ENCODE measurements at regions of chrX and their contacts with region 1.

Region 1: DNA sequence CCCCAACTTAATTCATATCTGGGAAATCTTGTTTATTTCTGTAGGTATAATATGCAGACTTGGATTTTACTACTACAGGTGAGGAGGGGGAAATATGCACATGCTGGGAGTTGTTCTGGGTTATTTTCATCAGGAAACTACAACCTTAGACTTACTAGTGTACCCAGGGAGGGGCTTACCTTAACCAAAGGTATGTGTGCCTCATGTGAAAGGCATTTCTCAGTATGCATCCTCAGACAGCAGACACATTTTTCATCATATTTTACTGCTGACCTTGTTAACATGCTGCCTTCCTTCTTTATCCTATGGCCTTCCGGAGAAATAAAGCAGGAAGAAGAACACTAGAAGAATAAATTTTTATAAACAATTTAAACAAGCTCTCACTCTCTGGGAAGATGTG is 214.9 kb downstream of the SPANXN4 start:
- DNase-seq: no peak
- ATAC-seq: no peak

Region 2: DNA sequence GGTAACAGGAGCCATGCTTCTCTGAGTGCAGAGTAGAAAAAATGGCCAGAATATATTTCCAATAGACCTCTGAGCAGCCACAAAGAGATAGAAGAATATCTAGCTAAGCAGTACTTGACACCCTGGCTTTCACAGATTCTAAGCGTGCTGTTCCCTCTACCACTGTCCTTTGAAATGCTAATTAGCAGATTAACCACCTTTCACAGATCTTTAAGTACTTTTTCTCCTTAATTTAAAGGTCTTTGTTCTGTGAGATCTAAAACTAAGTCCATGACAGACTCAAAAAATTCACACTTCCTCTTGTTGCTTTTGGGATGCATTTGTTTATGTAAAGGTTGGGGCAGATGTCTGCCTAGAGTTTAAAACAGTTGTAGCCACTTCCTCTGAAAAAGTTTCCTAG is 1007.3 kb before region 1 on chrX:
- intact Hi-C with region 1: loop called (anchors 10 kb)
- DNase-seq: no peak
- ATAC-seq: no peak

Region 3: DNA sequence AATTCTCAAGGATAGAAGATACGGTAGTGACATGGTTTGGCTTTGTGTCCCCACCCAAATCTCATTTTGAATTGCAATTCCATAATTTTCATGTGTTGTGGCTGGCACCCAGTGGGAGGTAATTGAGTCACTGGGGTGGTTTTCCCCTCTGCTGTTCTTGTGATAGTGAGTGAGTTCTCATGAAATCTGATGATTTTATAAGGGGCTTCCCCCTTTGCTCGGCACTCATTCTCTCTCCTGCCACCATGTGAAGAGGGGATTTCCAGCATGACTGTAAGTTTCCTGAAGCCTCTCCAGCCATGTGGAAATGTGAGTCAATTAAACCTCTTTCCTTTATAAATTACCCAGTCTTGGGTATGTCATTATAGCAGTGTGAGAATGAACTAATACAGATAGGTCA is 223.4 kb before region 1 on chrX:
- intact Hi-C with region 1: no loop called
- DNase-seq: no peak
- ATAC-seq: no peak

Region 4: GRCh38 chrX:143165778-143166177 is 74.9 kb before region 1 on chrX:
- intact Hi-C with region 1: no loop called
- DNase-seq: no peak
- ATAC-seq: no peak

Region 5: GRCh38 chrX:143633461-143634308 is 393.0 kb after region 1 on chrX:
- intact Hi-C with region 1: no loop called
- DNase-seq: no peak
- ATAC-seq: peak; percentile 41